CD14-positive monocyte (primary cell): ENCODE measurements at regions of chr22 and their contacts with region 1.

Region 1: DNA sequence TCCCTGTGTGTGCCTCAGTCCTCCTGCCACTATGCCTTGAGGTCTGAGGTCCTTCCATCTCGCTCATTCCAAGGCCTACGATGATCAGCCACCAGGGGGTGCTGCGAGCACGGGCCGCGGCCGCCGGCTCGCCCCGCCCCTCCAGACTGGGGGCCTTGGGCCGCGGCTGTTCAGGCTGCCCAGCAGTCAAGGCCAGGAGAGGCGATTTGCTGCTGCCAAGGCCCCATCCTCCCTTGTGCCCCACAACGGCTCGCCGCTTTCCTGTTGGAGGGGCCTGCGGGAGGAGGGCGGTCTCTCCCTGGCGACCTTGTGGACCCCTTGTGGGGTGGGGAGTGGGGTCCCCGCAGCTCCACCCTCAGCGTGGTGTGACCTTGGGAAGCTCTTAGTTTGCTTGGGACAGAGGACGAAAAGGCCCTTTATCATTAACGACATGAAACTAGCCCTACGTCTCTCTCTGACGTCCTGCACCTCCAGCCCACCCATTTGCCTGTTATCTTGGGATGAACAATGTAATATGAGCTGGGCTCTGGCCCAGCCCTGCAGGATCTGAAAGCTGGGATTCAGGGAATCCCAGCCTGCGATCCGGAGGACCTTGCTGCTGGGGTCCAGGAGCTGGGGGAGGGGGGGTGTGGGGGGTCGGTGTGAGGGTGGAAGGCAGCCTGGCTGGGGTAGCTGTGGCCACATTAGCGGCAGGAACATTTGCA is 5.3 kb upstream of the GALR3 start:
- DNase-seq: peak; percentile 68 to 74 (median 70)
- H3K4me3 ChIP-seq: peak overlapping the region; percentile 3 to 72 (median 10)
- H3K4me3 Mint-ChIP-seq: peak overlapping the region; percentile 55 to 89
- H3K27ac ChIP-seq: no peak overlapping the region
- H3K27ac Mint-ChIP-seq: no peak overlapping the region
- H3K4me1 ChIP-seq: peaks cover 16 to 20% of the 10 kb centered on the region in 2 donors
- H3K4me1 Mint-ChIP-seq: peaks cover 20% of the 10 kb centered on the region
- H3K27me3 ChIP-seq: peaks cover 7 to 28% of the 10 kb centered on the region in 2 donors
- H3K27me3 Mint-ChIP-seq: peaks cover 32 to 36% (median 34%) of the 10 kb centered on the region in 3 donors
- CTCF ChIP-seq: peak; percentile 93

Region 2: GRCh38 chr22:37862570-37863325 is 44.9 kb after region 1 on chr22:
- intact Hi-C with region 1: loop called (anchors 1 kb)
- DNase-seq: no peak
- H3K4me3 ChIP-seq: no peak overlapping the region
- H3K4me3 Mint-ChIP-seq: no peak overlapping the region
- H3K27ac ChIP-seq: no peak overlapping the region
- H3K27ac Mint-ChIP-seq: no peak overlapping the region
- H3K4me1 ChIP-seq: no peaks in the 10 kb centered on the region
- H3K4me1 Mint-ChIP-seq: no peaks in the 10 kb centered on the region
- H3K27me3 ChIP-seq: no peaks in the 10 kb centered on the region
- H3K27me3 Mint-ChIP-seq: no peaks in the 10 kb centered on the region
- CTCF ChIP-seq: no peak

Region 3: DNA sequence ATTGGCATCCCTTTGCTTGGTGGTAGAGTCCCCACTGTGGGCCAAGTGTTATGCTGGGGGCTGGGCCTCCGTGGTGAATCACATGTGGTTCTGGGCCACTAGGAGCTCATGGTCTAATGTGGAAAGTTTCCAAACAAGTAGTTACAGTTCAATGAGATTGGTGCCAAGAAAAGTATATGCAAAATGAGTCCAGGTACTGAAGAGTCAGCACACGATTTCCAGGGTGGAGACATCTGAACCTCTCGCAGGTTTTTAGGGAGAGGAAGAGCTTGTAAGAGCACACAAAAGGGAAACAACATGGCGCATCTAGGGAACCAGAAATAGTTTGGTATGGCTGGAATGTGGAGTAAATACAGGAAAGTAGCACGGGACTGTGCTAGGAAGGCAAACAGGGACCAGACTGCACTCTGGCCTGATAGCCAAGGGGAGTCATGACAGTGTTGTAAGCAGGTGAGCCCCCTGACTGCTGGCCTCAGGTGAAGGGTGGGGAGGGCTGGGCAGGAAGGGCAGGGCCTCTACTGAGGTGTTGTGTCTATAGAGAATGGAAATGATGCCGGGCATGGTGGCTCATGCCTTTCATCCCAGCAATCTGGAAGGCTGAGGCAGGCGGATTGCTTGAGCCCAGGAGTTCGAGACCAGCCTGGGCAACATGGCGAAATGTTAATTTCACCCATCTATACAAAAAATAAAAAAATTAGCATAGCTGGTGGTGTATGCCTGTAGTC is 148.2 kb after region 1 on chr22:
- intact Hi-C with region 1: loop called (anchors 5 to 10 kb)
- DNase-seq: no peak
- H3K4me3 ChIP-seq: no peak overlapping the region
- H3K4me3 Mint-ChIP-seq: no peak overlapping the region
- H3K27ac ChIP-seq: no peak overlapping the region
- H3K27ac Mint-ChIP-seq: no peak overlapping the region
- H3K4me1 ChIP-seq: no peaks in the 10 kb centered on the region
- H3K4me1 Mint-ChIP-seq: no peaks in the 10 kb centered on the region
- H3K27me3 ChIP-seq: no peaks in the 10 kb centered on the region
- H3K27me3 Mint-ChIP-seq: peaks cover 0 to 1% (median 0%) of the 10 kb centered on the region in 3 donors
- CTCF ChIP-seq: no peak